MCF 10A (cell line): ENCODE measurements at regions of chr6 and their contacts with region 1.

Region 1: DNA sequence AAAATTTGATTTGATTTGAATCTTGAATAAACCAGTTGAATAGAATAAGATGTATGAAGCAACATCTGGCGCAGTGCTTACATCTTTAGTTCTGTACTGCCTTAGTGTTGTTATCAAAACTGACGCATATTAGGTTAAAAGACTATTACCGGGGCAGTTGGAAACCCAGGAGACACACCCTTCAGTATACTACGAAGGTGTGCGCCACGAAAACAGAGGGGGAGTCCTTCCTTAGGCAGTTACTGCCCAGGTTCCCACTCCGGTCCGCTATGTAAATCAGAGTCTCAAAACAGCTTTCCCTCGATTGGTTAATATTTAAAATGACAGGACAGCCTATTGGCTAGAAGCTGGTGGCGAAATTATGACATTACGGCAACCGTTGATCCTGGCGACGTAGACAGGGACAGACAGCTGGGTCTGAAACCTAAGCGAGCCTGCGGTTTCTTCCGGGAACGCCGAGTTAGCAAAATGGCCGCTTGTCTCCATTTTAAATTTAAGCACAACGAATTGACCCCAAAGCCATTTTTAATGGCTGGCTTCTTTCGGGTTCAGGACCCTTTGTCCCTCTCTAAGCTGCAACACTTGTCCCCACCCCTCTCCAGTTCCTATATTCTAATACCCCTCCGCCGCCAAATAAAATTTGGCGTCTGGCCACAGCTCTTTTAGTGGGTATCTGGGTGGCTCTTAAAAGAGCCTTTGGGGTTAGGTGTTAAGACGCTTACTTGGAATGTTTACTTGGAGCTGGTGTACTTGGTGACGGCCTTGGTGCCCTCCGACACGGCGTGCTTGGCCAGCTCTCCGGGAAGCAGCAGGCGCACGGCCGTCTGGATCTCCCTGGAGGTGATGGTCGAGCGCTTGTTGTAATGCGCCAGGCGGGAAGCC is 35.8 kb downstream of the HFE start:
- DNase-seq: peak; percentile 99
- H3K4me3 Mint-ChIP-seq: peak overlapping the region; percentile 98
- H3K27ac Mint-ChIP-seq: peak overlapping the region; percentile 99
- H3K4me1 Mint-ChIP-seq: peaks cover 14% of the 10 kb centered on the region
- H3K27me3 Mint-ChIP-seq: no peaks in the 10 kb centered on the region
- CTCF ChIP-seq: no peak

Region 2: GRCh38 chr6:26031595-26032339 is 91.3 kb before region 1 on chr6:
- CTCF ChIA-PET with region 1: interaction called, 3 read pairs
- POLR2A ChIA-PET with region 1: interaction called, 332 read pairs
- intact Hi-C with region 1: no loop called
- DNase-seq: peak; percentile 99
- H3K4me3 Mint-ChIP-seq: peak overlapping the region; percentile 81
- H3K27ac Mint-ChIP-seq: peak overlapping the region; percentile 97
- H3K4me1 Mint-ChIP-seq: peaks cover 25% of the 10 kb centered on the region
- H3K27me3 Mint-ChIP-seq: no peaks in the 10 kb centered on the region
- CTCF ChIP-seq: peak; percentile 12

Region 3: DNA sequence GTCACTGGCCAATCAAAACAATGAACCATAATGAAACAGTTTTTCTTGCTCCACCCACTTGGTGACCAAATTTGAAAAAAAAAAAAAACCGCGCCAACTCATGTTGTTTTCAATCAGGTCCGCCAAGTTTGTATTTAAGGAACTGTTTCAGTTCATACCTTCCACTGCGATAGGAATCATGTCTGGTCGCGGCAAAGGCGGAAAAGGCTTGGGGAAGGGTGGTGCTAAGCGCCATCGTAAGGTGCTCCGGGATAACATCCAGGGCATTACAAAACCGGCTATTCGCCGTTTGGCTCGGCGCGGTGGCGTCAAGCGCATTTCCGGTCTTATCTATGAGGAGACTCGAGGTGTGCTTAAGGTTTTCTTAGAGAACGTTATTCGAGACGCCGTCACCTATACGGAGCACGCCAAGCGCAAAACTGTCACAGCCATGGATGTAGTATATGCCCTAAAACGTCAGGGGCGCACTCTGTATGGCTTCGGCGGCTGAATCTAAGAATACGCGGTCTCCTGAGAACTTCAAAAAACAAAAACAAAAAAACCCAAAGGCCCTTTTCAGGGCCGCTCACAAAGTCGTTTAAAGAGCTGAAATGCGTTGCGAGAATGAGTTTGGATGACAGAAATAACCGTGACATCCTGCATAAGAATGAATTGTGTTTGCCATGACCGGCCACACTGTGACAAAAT is 19.1 kb before region 1 on chr6:
- CTCF ChIA-PET with region 1: interaction called, 4 read pairs
- POLR2A ChIA-PET with region 1: interaction called, 198 read pairs
- intact Hi-C with region 1: loop called (anchors 1 kb)
- DNase-seq: peak; percentile 96
- H3K4me3 Mint-ChIP-seq: peak overlapping the region; percentile 75
- H3K27ac Mint-ChIP-seq: peak overlapping the region; percentile 92
- H3K4me1 Mint-ChIP-seq: peaks cover 11% of the 10 kb centered on the region
- H3K27me3 Mint-ChIP-seq: no peaks in the 10 kb centered on the region
- CTCF ChIP-seq: peak; percentile 41

Region 4: GRCh38 chr6:26175428-26176181 is 52.6 kb after region 1 on chr6:
- CTCF ChIA-PET with region 1: interaction called, 6 read pairs
- POLR2A ChIA-PET with region 1: interaction called, 212 read pairs
- intact Hi-C with region 1: no loop called
- DNase-seq: peak; percentile 82
- H3K4me3 Mint-ChIP-seq: peak overlapping the region; percentile 23
- H3K27ac Mint-ChIP-seq: peak overlapping the region; percentile 70
- H3K4me1 Mint-ChIP-seq: peaks cover 28% of the 10 kb centered on the region
- H3K27me3 Mint-ChIP-seq: no peaks in the 10 kb centered on the region
- CTCF ChIP-seq: peak; percentile 70

Region 5: GRCh38 chr6:26223650-26224546 is 100.9 kb after region 1 on chr6:
- CTCF ChIA-PET with region 1: no interaction called
- POLR2A ChIA-PET with region 1: interaction called, 65 read pairs
- intact Hi-C with region 1: no loop called
- DNase-seq: peak; percentile 91
- H3K4me3 Mint-ChIP-seq: no peak overlapping the region
- H3K27ac Mint-ChIP-seq: no peak overlapping the region
- H3K4me1 Mint-ChIP-seq: peaks cover 6% of the 10 kb centered on the region
- H3K27me3 Mint-ChIP-seq: no peaks in the 10 kb centered on the region
- CTCF ChIP-seq: no peak

Region 6: DNA sequence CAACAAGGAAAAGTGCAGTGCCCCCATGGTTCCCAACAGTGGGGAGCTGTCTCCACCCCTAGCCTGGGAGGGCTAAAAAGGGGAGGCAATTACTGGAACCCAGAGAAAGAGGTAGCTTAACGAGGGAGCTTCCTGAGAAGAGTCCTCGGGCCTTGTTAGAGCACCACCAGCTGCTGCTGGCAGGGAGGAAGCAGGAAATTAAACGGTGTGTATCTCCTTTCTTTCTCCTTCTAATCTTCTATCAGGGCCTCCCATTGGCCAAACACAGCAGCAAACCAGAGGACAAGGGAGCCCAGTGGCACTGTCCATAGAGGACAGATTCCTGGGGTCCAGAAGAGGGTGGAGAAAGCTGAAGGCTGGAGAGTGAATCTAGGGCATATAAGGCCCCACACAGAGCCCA is 252.2 kb after region 1 on chr6:
- CTCF ChIA-PET with region 1: no interaction called
- POLR2A ChIA-PET with region 1: no interaction called
- intact Hi-C with region 1: no loop called
- DNase-seq: no peak
- H3K4me3 Mint-ChIP-seq: no peak overlapping the region
- H3K27ac Mint-ChIP-seq: peak overlapping the region; percentile 32
- H3K4me1 Mint-ChIP-seq: peaks cover 9% of the 10 kb centered on the region
- H3K27me3 Mint-ChIP-seq: no peaks in the 10 kb centered on the region
- CTCF ChIP-seq: no peak

Region 7: GRCh38 chr6:27146706-27147505 is 1023.9 kb after region 1 on chr6:
- CTCF ChIA-PET with region 1: no interaction called
- POLR2A ChIA-PET with region 1: interaction called, 82 read pairs
- intact Hi-C with region 1: no loop called
- DNase-seq: peak; percentile 99
- H3K4me3 Mint-ChIP-seq: no peak overlapping the region
- H3K27ac Mint-ChIP-seq: no peak overlapping the region
- H3K4me1 Mint-ChIP-seq: no peaks in the 10 kb centered on the region
- H3K27me3 Mint-ChIP-seq: no peaks in the 10 kb centered on the region
- CTCF ChIP-seq: no peak

Region 8: DNA sequence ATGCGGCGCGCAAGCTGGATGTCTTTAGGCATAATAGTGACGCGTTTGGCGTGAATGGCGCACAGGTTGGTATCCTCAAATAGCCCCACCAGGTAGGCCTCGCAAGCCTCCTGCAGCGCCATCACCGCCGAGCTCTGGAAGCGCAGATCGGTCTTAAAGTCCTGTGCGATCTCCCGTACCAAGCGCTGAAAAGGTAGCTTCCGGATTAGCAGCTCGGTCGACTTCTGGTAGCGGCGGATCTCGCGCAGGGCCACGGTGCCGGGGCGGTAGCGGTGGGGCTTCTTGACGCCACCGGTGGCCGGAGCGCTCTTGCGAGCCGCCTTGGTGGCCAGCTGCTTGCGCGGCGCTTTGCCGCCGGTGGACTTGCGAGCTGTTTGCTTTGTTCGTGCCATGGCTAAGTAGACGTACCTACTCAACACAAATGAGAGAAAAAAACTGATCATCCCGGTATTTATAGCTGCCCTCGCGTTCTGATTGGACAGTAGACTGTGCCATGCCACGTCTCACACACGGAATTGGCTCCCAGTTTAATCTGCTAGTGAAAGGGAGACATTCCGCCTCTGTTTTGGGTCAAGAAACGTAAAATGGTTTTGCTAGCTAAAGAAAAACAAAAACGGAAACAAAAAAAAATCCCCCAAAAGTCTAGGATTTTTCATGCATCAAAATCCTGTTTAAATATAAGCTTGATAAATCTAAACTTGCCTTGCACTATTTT is 1749.0 kb after region 1 on chr6:
- CTCF ChIA-PET with region 1: no interaction called
- POLR2A ChIA-PET with region 1: interaction called, 35 read pairs
- intact Hi-C with region 1: no loop called
- DNase-seq: peak; percentile 89
- H3K4me3 Mint-ChIP-seq: peak overlapping the region; percentile 79
- H3K27ac Mint-ChIP-seq: peak overlapping the region; percentile 93
- H3K4me1 Mint-ChIP-seq: peaks cover 2% of the 10 kb centered on the region
- H3K27me3 Mint-ChIP-seq: no peaks in the 10 kb centered on the region
- CTCF ChIP-seq: no peak